ENCODE measurements at regions of chr19 and their contacts with region 1.

Region 1: DNA sequence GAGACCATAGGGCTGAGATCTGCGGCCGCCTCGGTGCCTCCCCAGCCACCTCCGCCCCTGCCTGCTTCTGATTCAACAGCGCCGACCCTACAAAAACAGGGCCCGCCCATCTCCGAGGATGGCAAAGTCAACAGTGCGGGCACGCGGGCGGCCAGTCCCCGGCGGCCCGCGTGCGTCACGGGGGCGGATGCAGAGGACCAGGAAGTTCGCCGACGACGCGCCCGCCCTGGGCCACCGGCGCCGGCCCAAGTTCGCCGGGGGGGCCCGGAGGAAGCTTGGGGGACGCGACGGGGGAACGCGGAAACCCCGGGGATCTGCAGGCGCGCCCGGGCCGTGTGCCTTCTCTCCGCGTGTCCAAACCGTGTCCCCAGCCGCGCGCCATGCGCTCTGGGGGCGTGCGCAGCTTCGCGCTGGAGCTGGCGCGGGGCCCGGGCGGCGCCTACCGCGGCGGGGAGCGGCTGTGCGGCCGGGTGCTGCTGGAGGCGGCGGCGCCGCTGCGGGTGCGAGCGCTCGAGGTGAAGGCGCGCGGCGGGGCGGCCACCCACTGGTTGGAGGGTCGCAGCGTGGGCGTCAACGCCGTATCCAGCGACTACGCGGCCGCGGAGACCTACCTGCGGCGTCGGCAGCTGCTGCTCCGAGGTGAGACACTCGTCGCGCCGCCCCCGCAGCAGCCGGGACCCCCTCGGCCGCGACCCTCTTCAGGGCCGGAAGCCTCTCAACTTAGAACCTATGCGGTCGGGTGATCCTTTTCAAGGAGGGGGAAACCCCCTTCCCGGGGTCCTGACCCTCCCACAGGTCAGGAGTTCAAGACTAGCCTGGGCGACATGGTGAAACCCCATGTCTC is 6.8 kb upstream of the ARRDC2 start:
- DNase-seq: peak; percentile 94 to 98
- ATAC-seq: peak; percentile 80 to 92 (median 82)
- H3K4me3 ChIP-seq: peak overlapping the region; percentile 74
- H3K4me3 Mint-ChIP-seq: peak overlapping the region; percentile 88
- H3K27ac ChIP-seq: peak overlapping the region; percentile 94
- H3K27ac Mint-ChIP-seq: peak overlapping the region; percentile 89 to 98
- H3K4me1 ChIP-seq: peaks cover 38% of the 10 kb centered on the region
- H3K4me1 Mint-ChIP-seq: peaks cover 6 to 25% of the 10 kb centered on the region in 2 donors
- H3K27me3 ChIP-seq: no peaks in the 10 kb centered on the region
- H3K27me3 Mint-ChIP-seq: no peaks in the 10 kb centered on the region
- CTCF ChIP-seq: no peak

Region 2: GRCh38 chr19:17859533-17860330 is 141.4 kb before region 1 on chr19 and contains the start of gene RPL18A:
- intact Hi-C with region 1: loop called (anchors 1 kb)
- DNase-seq: peak; percentile 94 to 99
- ATAC-seq: peak; percentile 93 to 99 (median 95)
- H3K4me3 ChIP-seq: peak within 1 kb of the TSS; percentile 68
- H3K4me3 Mint-ChIP-seq: peak within 1 kb of the TSS; percentile 99
- H3K27ac ChIP-seq: peak within 1 kb of the TSS; percentile 46
- H3K27ac Mint-ChIP-seq: peak within 1 kb of the TSS; percentile 86 to 95
- H3K4me1 ChIP-seq: peaks cover 37% of the 10 kb centered on the region
- H3K4me1 Mint-ChIP-seq: peaks cover 30 to 32% of the 10 kb centered on the region in 2 donors
- H3K27me3 ChIP-seq: no peaks in the 10 kb centered on the region
- H3K27me3 Mint-ChIP-seq: no peaks in the 10 kb centered on the region
- CTCF ChIP-seq: peak; percentile 75
- total RNA-seq, gene RPL18A: 1,015 to 1,285 (median 1,208) TPM

Region 3: GRCh38 chr19:17932485-17933338 is 68.4 kb before region 1 on chr19 and contains the start of gene CCDC124:
- intact Hi-C with region 1: loop called (anchors 2 kb)
- DNase-seq: peak; percentile 91 to 96
- ATAC-seq: peak; percentile 93 to 96 (median 96)
- H3K4me3 ChIP-seq: peak within 1 kb of the TSS; percentile 70
- H3K4me3 Mint-ChIP-seq: peak within 1 kb of the TSS; percentile 96
- H3K27ac ChIP-seq: peak within 1 kb of the TSS; percentile 96
- H3K27ac Mint-ChIP-seq: peak within 1 kb of the TSS; percentile 94 to 97
- H3K4me1 ChIP-seq: peaks cover 23% of the 10 kb centered on the region
- H3K4me1 Mint-ChIP-seq: peaks cover 16 to 17% of the 10 kb centered on the region in 2 donors
- H3K27me3 ChIP-seq: no peaks in the 10 kb centered on the region
- H3K27me3 Mint-ChIP-seq: no peaks in the 10 kb centered on the region
- CTCF ChIP-seq: peak; percentile 79
- total RNA-seq, gene CCDC124: 32.6 to 37.6 (median 37.4) TPM

Region 4: DNA sequence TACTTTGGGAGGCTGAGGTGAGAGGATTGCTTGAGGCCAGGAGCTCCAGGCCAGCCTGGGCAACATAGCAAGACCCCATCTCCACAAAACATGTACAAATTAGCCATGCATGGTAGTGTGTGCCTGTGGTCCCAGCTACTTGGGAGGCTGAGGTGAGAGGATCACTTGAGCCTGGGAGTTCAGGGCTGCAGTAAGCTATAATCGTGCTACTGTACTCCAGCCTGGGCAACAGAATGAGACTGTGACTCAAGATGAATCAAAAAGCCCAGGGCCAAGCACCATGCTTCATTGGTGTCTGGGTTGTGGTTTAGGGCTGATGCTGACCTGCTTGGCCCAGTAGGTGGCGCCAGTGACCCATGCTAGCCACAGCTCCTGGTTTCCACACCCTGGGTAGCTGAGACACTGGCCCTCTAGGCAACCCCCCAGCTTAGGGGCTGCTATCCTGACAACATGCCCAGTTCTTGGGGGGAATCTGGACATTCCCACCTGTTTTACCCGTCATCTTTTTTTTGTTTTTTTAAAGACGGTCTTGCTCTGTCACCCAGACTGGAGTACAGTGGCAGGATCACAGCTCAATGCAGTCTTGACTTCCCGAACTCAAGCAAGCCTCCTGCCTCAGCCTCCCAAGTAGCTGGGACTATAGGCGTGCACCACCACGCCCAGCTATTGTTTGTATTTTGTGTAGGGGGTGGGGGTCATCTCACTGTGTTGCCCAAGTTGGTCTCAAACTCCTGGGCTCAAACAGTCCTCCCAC is 62.9 kb before region 1 on chr19:
- intact Hi-C with region 1: loop called (anchors 1 kb)
- DNase-seq: peak; percentile 85 to 92
- ATAC-seq: peak; percentile 94 to 98 (median 98)
- H3K4me3 ChIP-seq: no peak overlapping the region
- H3K4me3 Mint-ChIP-seq: no peak overlapping the region
- H3K27ac ChIP-seq: no peak overlapping the region
- H3K27ac Mint-ChIP-seq: no peak overlapping the region
- H3K4me1 ChIP-seq: peaks cover 10% of the 10 kb centered on the region
- H3K4me1 Mint-ChIP-seq: peaks cover 6% of the 10 kb centered on the region in 2 donors
- H3K27me3 ChIP-seq: no peaks in the 10 kb centered on the region
- H3K27me3 Mint-ChIP-seq: no peaks in the 10 kb centered on the region
- CTCF ChIP-seq: peak; percentile 81

Region 5: DNA sequence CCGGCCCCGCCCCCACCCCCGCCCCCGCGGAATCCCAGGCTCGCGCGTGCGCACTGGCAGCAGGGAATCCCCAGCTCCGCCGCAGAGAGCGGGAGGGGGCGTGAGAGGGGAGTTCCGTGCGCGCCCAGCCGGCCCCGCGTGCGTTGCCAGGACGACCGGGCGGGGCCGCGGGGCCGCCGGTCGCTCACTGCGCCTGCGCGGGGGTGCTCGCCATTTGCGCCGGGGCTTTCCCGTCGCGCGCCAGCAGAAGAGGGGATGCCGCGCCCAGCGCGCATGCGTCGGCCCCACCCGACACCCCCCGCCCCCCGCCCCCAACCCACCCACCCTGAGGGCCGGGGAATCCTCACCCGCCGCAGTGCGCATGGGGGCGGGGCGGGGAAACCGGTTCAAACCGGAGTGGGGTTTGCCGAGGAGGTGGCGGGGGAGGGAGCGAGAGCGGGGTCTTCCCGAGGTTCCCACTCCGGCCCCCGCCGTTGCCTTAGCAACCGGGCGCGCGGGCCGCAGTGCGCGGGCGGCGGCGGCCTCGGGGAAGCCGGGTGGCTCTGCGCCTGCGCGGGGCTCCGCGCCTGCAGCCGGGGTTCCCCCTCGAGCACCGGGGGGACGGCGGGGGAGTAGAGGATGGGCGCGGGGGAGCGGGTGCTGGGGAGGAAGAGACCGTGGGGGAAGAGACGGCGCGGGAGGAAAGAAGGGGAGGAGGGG is 53.2 kb before region 1 on chr19:
- intact Hi-C with region 1: loop called (anchors 2 kb)
- DNase-seq: peak; percentile 96 to 98
- ATAC-seq: peak; percentile 56 to 86 (median 72)
- H3K4me3 ChIP-seq: peak overlapping the region; percentile 37
- H3K4me3 Mint-ChIP-seq: peak overlapping the region; percentile 92
- H3K27ac ChIP-seq: peak overlapping the region; percentile 91
- H3K27ac Mint-ChIP-seq: peak overlapping the region; percentile 98 to 99
- H3K4me1 ChIP-seq: peaks cover 53% of the 10 kb centered on the region
- H3K4me1 Mint-ChIP-seq: peaks cover 29 to 47% of the 10 kb centered on the region in 2 donors
- H3K27me3 ChIP-seq: peaks cover 34% of the 10 kb centered on the region
- H3K27me3 Mint-ChIP-seq: peaks cover 13 to 33% of the 10 kb centered on the region in 2 donors
- CTCF ChIP-seq: no peak

Region 6: DNA sequence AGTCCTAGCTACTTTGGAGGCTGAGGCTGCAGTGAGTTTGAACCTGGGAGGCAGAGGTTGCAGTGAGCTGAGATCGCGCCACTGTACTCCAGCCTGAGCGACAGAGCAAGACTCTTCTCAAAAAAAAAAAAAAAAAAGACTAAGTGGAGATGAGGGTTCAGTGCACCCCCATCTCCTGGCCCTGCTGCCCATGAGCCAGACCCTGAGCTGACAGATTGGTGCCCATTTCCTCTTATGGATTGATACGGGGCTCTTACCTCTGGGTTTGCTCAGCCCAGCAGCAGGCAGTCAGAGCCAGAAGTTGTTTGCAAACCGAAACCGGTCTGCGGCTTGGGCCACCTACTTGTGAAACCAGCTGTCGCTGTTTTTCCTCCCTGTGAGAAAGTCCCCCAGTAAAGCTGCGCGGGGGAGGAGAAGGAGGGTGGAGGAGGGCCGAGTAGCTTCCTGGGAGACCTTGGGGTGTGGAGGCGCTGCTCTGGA is 43.7 kb after region 1 on chr19:
- intact Hi-C with region 1: loop called (anchors 2 kb)
- DNase-seq: peak; percentile 84 to 94
- ATAC-seq: peak; percentile 93 to 99 (median 95)
- H3K4me3 ChIP-seq: peak overlapping the region; percentile 25
- H3K4me3 Mint-ChIP-seq: peak overlapping the region; percentile 60
- H3K27ac ChIP-seq: peak overlapping the region; percentile 74
- H3K27ac Mint-ChIP-seq: peak overlapping the region; percentile 82 to 94
- H3K4me1 ChIP-seq: peaks cover 31% of the 10 kb centered on the region
- H3K4me1 Mint-ChIP-seq: peaks cover 20 to 38% of the 10 kb centered on the region in 2 donors
- H3K27me3 ChIP-seq: no peaks in the 10 kb centered on the region
- H3K27me3 Mint-ChIP-seq: peaks cover 7 to 26% of the 10 kb centered on the region in 2 donors
- CTCF ChIP-seq: no peak

Region 7: GRCh38 chr19:18152444-18152816 is 151.3 kb after region 1 on chr19:
- intact Hi-C with region 1: loop called (anchors 1 kb)
- DNase-seq: peak; percentile 99 to 100
- ATAC-seq: peak; percentile 65 to 82 (median 67)
- H3K4me3 ChIP-seq: peak overlapping the region; percentile 69
- H3K4me3 Mint-ChIP-seq: peak overlapping the region; percentile 95
- H3K27ac ChIP-seq: peak overlapping the region; percentile 91
- H3K27ac Mint-ChIP-seq: peak overlapping the region; percentile 89 to 97
- H3K4me1 ChIP-seq: peaks cover 61% of the 10 kb centered on the region
- H3K4me1 Mint-ChIP-seq: peaks cover 41 to 69% of the 10 kb centered on the region in 2 donors
- H3K27me3 ChIP-seq: no peaks in the 10 kb centered on the region
- H3K27me3 Mint-ChIP-seq: peaks cover 0 to 2% of the 10 kb centered on the region in 2 donors
- CTCF ChIP-seq: peak; percentile 79

Measured in natural killer cell (primary cell).